Heart right ventricle (tissue), 16 donors: ENCODE measurements at regions of chr4 and their contacts with region 1.

Region 1: GRCh38 chr4:124478470-124478869 is 234.1 kb downstream of the ANKRD50 start:
- DNase-seq: no peak
- ATAC-seq: peak in 6 of 8 donors; percentile 41 to 85 (median 70)
- H3K4me3 ChIP-seq: no peak overlapping the region
- H3K27ac ChIP-seq: peak overlapping the region in 4 of 10 donors; percentile 13 to 65 (median 54)
- H3K4me1 ChIP-seq: peaks cover 0 to 22% (median 9%) of the 10 kb centered on the region in 9 donors
- H3K27me3 ChIP-seq: no peaks in the 10 kb centered on the region
- CTCF ChIP-seq: no peak

Region 2: DNA sequence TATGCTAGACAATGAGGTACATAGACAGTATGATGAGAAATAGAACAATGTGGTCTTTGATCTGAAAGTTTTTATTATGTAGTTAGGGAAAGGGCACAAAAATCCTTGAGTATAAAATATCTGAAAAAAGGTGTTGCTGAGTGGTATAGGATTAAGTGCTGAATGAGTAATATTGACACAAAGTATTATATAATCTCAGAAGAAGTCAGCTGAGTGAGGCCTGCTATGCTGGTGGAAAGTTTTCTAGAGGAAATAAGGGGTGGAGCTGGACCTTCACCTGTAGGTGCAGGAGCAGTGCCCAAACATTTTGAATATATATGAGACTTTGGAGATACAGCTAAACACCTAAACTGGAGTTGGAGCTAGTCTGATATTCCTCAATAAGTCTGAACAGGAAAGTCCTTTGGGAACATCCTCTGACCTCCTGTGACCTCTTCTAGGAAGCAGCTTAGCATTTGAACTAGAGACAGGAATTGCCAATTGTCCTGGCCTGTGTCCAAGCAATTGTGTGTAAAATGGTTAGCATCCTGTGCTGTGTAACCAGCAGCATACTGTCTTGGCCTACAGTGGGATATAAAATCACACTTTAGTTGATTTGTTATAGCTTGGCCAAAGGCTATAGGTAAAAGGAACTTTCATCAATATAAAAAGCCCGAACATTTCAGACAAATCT is 51.2 kb before region 1 on chr4:
- intact Hi-C with region 1: loop called in 1 of 10 experiments (anchors 5 kb)
- DNase-seq: peak in 1 of 2 donors; percentile 85
- ATAC-seq: peak; percentile 45 to 95 (median 86)
- H3K4me3 ChIP-seq: no peak overlapping the region
- H3K27ac ChIP-seq: peak overlapping the region in 6 of 10 donors; percentile 1 to 67 (median 34)
- H3K4me1 ChIP-seq: peaks cover 0 to 33% (median 9%) of the 10 kb centered on the region in 9 donors
- H3K27me3 ChIP-seq: no peaks in the 10 kb centered on the region
- CTCF ChIP-seq: no peak

Region 3: GRCh38 chr4:124499261-124499660 is 20.8 kb after region 1 on chr4:
- intact Hi-C with region 1: no loop called
- DNase-seq: no peak
- ATAC-seq: no peak
- H3K4me3 ChIP-seq: no peak overlapping the region
- H3K27ac ChIP-seq: no peak overlapping the region
- H3K4me1 ChIP-seq: no peaks in the 10 kb centered on the region
- H3K27me3 ChIP-seq: no peaks in the 10 kb centered on the region
- CTCF ChIP-seq: no peak

Region 4: GRCh38 chr4:124631760-124632159 is 153.3 kb after region 1 on chr4:
- intact Hi-C with region 1: loop called in 1 of 10 experiments (anchors 5 kb)
- DNase-seq: peak in 1 of 2 donors; percentile 70
- ATAC-seq: peak; percentile 67 to 97 (median 88)
- H3K4me3 ChIP-seq: no peak overlapping the region
- H3K27ac ChIP-seq: peak overlapping the region in 1 of 10 donors; percentile 29
- H3K4me1 ChIP-seq: peaks cover 0 to 13% (median 0%) of the 10 kb centered on the region in 9 donors
- H3K27me3 ChIP-seq: no peaks in the 10 kb centered on the region
- CTCF ChIP-seq: no peak